K562 (cell line): ENCODE measurements at regions of chr19 and their contacts with region 1.

Region 1: DNA sequence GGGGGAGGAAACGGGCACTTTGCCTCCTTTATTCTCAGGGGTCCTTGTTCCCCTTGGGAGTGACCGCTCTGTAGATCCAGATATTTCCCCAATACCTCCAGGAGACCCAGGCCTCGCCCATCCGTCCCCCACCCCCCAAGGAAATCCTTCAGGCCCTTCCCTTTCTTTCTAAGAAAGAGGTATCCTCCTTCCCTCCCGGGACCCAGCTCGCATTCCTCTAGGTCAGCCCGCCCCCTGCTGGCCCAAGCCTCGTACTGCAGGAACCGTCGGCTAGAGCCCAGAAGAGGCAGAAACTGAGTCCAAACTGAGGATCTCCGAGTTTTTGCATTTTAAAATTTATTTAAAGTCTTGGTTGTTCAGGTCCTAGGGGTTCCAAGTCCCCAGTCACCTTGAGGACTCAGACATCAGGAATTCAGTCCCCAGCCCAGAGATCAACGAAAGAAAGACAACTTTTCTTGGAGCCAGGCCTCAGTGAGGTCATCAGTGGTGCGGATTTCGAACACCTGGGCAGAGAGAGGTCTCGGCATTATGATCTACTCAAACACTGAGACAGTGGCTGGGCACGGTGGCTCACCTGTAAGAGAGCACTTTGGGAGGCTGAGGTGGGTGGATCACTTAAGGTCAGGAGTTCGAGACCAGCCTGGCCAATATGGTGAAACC is 7.5 kb upstream of the LRFN1 start:
- DNase-seq: peak; percentile 76 to 86 (median 79)
- ATAC-seq: peak; percentile 83
- H3K4me3 ChIP-seq: no peak overlapping the region
- H3K27ac ChIP-seq: no peak overlapping the region
- H3K4me1 ChIP-seq: peaks cover 0 to 3% of the 10 kb centered on the region in 2 experiments; a peak in 2 of 5 replicates
- H3K27me3 ChIP-seq: no peaks in the 10 kb centered on the region
- CTCF ChIP-seq: peak; percentile 90 to 96 (median 91)
- EP300 ChIP-seq: no peak
- POLR2A ChIP-seq: no peak
- RAD21 ChIP-seq: peak; percentile 95 to 96

Region 2: GRCh38 chr19:39110263-39110967 is 217.8 kb before region 1 on chr19:
- CTCF ChIA-PET with region 1: interaction called, 14 read pairs
- POLR2A ChIA-PET with region 1: no interaction called
- in situ Hi-C with region 1: no loop called
- intact Hi-C with region 1: no loop called
- DNase-seq: peak; percentile 66 to 73 (median 70)
- ATAC-seq: peak; percentile 89
- H3K4me3 ChIP-seq: no peak overlapping the region
- H3K27ac ChIP-seq: no peak overlapping the region
- H3K4me1 ChIP-seq: peaks cover 0 to 23% of the 10 kb centered on the region in 2 experiments; a peak in 3 of 5 replicates
- H3K27me3 ChIP-seq: peaks cover 15 to 46% of the 10 kb centered on the region in 2 experiments; a peak in 4 of 5 replicates
- CTCF ChIP-seq: peak; percentile 70 to 89 (median 79)
- EP300 ChIP-seq: no peak
- POLR2A ChIP-seq: no peak
- RAD21 ChIP-seq: peak; percentile 48 to 76

Region 3: GRCh38 chr19:39131235-39131755 is 196.9 kb before region 1 on chr19:
- CTCF ChIA-PET with region 1: no interaction called
- POLR2A ChIA-PET with region 1: no interaction called
- in situ Hi-C with region 1: no loop called
- intact Hi-C with region 1: no loop called
- DNase-seq: no peak
- ATAC-seq: no peak
- H3K4me3 ChIP-seq: no peak overlapping the region
- H3K27ac ChIP-seq: no peak overlapping the region
- H3K4me1 ChIP-seq: peaks cover 21 to 59% of the 10 kb centered on the region in 2 experiments
- H3K27me3 ChIP-seq: no peaks in the 10 kb centered on the region
- CTCF ChIP-seq: no peak
- EP300 ChIP-seq: no peak
- POLR2A ChIP-seq: no peak
- RAD21 ChIP-seq: no peak

Region 4: DNA sequence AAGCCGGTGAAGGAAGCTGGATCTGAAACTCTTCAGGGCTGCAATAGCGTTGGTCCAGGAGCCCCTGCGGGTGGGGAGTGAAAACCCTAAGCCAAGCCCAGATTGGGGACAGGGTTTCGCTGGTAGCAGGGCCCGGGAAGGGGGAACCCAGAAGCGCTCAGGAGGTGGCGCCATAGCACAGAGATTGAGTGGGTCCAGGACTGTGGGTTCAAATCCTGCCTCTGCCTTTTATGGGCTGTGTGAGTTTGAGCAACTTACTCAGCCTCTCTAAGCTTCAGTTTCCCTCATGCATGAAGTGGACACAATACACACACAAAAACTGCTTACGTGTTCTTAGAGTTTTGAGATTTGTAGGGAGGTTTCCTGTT is 115.8 kb before region 1 on chr19:
- CTCF ChIA-PET with region 1: interaction called, 21 read pairs
- POLR2A ChIA-PET with region 1: interaction called, 3 read pairs
- in situ Hi-C with region 1: loop called (anchors 5 kb)
- intact Hi-C with region 1: loop called (anchors 1 kb)
- DNase-seq: peak; percentile 48 to 75 (median 60)
- ATAC-seq: peak; percentile 96
- H3K4me3 ChIP-seq: no peak overlapping the region
- H3K27ac ChIP-seq: no peak overlapping the region
- H3K4me1 ChIP-seq: no peaks in the 10 kb centered on the region
- H3K27me3 ChIP-seq: peaks cover 0 to 5% of the 10 kb centered on the region in 2 experiments; a peak in 1 of 5 replicates
- CTCF ChIP-seq: peak; percentile 84 to 90 (median 89)
- EP300 ChIP-seq: no peak
- POLR2A ChIP-seq: no peak
- RAD21 ChIP-seq: peak; percentile 78 to 97